WTC11 (cell line): ENCODE measurements at regions of chr5 and their contacts with region 1.

Region 1: DNA sequence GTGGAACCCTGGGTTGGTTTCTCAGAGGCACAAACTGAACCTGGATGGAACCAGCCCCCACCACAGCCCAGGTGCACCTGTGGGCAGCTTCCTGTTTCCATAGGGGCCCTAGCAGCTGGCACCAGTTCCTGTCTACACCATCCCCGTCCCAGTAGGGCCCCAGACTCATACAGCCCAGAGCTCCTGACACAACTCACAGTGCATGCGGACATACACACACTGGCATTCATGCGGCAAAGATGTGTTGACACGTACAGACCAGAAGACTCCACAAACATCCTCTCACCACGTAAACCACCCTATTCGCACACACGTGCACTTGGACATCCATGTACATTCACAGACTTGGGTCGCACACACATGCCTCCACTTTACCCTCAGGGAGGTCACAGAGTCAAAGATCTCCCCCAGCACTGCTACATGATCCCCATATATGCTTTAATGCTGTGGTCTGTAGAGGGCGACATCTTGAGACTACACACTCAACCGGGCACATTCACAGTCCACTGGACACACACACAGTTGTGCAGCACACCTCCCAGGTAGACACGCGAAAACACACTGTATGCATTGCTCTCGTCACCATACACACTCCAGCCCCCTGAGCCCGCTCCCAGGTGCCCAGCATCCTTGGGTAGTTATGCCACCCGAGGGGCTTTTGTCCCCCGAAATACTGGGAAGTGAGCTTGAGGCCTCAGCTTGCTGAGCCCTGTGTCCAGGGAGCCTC is 22.4 kb downstream of the CXXC5 start:
- DNase-seq: no peak
- ATAC-seq: 0 out of 2 replicates have a peak, but pooled peaks have one; percentile 6
- H3K4me3 Mint-ChIP-seq: no peak overlapping the region
- H3K27ac Mint-ChIP-seq: peak overlapping the region; percentile 59
- H3K4me1 Mint-ChIP-seq: peaks cover 71% of the 10 kb centered on the region
- H3K27me3 Mint-ChIP-seq: no peaks in the 10 kb centered on the region
- CTCF ChIP-seq: no peak

Region 2: DNA sequence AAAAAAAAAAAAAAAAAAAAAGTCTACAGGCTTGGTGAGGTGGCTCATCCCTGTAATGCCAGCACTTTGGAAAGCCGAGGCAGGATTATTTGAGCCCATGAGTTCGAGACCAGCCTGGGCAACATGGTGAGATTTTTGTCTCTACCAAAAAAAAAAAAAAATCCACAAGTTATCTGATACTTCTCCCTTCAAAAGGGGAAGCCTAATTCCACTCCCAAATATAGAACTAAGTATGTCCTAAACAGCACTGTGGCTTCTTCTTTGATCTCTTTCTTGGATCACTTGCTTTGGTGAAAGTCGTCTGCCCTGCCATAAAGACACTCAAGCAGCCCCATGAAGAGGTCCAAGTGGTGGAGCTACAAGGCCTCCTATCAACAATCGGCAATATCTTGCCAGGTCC is 169.2 kb before region 1 on chr5:
- CTCF ChIA-PET with region 1: no interaction called
- POLR2A ChIA-PET with region 1: no interaction called
- DNase-seq: no peak
- ATAC-seq: no peak
- H3K4me3 Mint-ChIP-seq: no peak overlapping the region
- H3K27ac Mint-ChIP-seq: no peak overlapping the region
- H3K4me1 Mint-ChIP-seq: peaks cover 27% of the 10 kb centered on the region
- H3K27me3 Mint-ChIP-seq: peaks cover 9% of the 10 kb centered on the region
- CTCF ChIP-seq: no peak

Region 3: DNA sequence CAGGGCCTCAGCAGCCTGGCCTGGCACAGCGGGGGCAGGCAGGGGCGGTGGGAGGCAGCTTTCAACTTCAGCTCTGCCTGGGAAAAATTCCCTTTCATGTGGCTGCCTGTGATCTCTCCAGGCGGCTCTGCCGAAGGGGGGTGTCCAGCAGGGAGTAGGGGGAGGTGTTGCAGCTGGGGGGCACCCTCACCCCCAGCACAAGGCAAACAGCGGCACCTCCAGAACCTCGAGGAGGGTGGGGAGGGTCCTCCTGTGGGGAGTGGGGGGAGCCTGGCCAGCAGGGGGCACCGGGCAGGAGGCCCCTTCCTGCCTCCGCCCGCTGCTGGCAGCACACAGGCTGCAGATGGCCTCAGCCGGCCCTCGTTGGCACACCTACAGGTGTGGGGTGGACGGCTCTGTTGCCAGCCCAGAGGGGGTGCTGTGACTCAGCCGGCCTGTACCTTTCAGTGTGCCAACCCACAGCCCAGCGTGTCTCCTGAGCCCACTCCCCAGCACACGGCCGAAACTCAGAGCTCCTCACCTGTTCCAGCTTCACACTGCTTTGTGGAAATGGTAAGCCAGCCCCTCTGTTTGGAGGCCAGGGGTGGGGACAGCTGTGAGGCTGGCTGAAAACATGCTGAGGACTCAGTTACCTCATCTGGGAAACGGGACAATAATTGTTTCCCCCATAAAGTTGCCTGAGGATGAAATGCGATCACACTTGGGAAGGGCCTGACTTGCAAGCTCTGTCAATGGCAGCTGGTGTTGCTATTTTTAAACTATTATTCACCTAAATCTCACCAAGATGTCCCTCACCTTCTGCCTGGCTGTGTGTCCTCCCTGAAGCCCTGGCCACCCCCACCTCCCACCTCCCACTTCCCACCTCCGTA is 14.6 kb after region 1 on chr5:
- CTCF ChIA-PET with region 1: interaction called, 29 read pairs
- POLR2A ChIA-PET with region 1: no interaction called
- DNase-seq: no peak
- ATAC-seq: no peak
- H3K4me3 Mint-ChIP-seq: no peak overlapping the region
- H3K27ac Mint-ChIP-seq: no peak overlapping the region
- H3K4me1 Mint-ChIP-seq: peaks cover 70% of the 10 kb centered on the region
- H3K27me3 Mint-ChIP-seq: no peaks in the 10 kb centered on the region
- CTCF ChIP-seq: no peak

Region 4: GRCh38 chr5:139690064-139690802 is 19.7 kb after region 1 on chr5:
- CTCF ChIA-PET with region 1: interaction called, 29 read pairs
- POLR2A ChIA-PET with region 1: interaction called, 3 read pairs
- DNase-seq: no peak
- ATAC-seq: peak; percentile 11
- H3K4me3 Mint-ChIP-seq: peak overlapping the region; percentile 24; the same call in 1 of the 2 replicates
- H3K27ac Mint-ChIP-seq: peak overlapping the region; percentile 19; the same call in 1 of the 2 replicates
- H3K4me1 Mint-ChIP-seq: peaks cover 63% of the 10 kb centered on the region
- H3K27me3 Mint-ChIP-seq: peaks cover 24% of the 10 kb centered on the region
- CTCF ChIP-seq: no peak

Region 5: GRCh38 chr5:140106101-140106500 is 435.6 kb after region 1 on chr5:
- CTCF ChIA-PET with region 1: no interaction called
- POLR2A ChIA-PET with region 1: no interaction called
- DNase-seq: no peak
- ATAC-seq: no peak
- H3K4me3 Mint-ChIP-seq: peak overlapping the region; percentile 90
- H3K27ac Mint-ChIP-seq: no peak overlapping the region
- H3K4me1 Mint-ChIP-seq: peaks cover 33% of the 10 kb centered on the region
- H3K27me3 Mint-ChIP-seq: peaks cover 78% of the 10 kb centered on the region
- CTCF ChIP-seq: no peak

Region 6: GRCh38 chr5:140202078-140202477 is 531.5 kb after region 1 on chr5:
- CTCF ChIA-PET with region 1: no interaction called
- POLR2A ChIA-PET with region 1: no interaction called
- DNase-seq: no peak
- ATAC-seq: no peak
- H3K4me3 Mint-ChIP-seq: no peak overlapping the region
- H3K27ac Mint-ChIP-seq: no peak overlapping the region
- H3K4me1 Mint-ChIP-seq: peaks cover 12% of the 10 kb centered on the region
- H3K27me3 Mint-ChIP-seq: no peaks in the 10 kb centered on the region
- CTCF ChIP-seq: no peak